ENCODE measurements at regions of chr6 and their contacts with region 1.

Region 1: GRCh38 chr6:159134701-159135364 is 34.4 kb upstream of the FNDC1 start:
- DNase-seq: peak; percentile 46 to 77 (median 68)
- ATAC-seq: peak; percentile 96
- H3K4me3 ChIP-seq: no peak overlapping the region
- H3K4me3 Mint-ChIP-seq: no peak overlapping the region
- H3K27ac ChIP-seq: no peak overlapping the region
- H3K27ac Mint-ChIP-seq: no peak overlapping the region
- H3K4me1 ChIP-seq: no peaks in the 10 kb centered on the region
- H3K4me1 Mint-ChIP-seq: peaks cover 0 to 9% (median 0%) of the 10 kb centered on the region in 7 donors
- H3K27me3 ChIP-seq: no peaks in the 10 kb centered on the region
- H3K27me3 Mint-ChIP-seq: peaks cover 0 to 42% (median 7%) of the 10 kb centered on the region in 5 donors

Region 2: DNA sequence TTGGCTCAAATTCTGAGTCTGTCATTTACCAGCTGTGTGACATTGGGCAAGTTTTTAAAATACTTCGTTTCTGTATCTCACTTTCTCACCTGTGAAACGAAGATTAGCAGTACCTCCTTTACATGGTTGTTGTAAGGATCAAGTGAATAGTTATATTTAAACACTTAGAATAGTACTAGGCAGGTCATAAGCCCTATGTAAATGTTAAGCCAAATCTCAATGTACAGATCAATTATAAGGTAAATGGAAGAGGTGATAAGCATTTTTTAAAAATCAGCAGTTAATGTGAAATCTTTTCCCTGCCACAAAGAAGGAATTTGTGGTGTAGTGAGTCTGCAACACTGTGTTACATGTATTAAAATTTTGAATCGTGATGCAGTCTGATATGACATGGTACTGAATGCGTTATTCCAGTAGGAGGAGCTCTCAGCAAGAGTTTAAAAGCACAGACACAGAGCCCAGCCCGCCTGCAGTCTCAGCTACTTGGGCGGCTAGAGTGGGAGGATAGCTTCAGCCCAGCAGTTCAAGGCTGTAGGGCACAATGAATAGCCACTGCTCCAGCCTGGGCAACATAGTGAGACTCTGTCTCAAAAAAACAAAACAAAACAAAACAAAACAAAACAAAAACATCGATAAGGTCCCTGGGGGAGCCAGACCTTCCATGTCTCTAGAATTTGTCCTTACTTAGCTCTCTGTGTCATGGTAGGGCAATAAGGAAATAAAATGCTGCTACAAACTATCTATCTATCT is 920.7 kb before region 1 on chr6:
- CTCF ChIA-PET with region 1: no interaction called
- POLR2A ChIA-PET with region 1: no interaction called
- intact Hi-C with region 1: loop called in 1 of 2 experiments (anchors 5 kb)
- DNase-seq: peak; percentile 18 to 62 (median 49)
- ATAC-seq: peak; percentile 96
- H3K4me3 ChIP-seq: no peak overlapping the region
- H3K4me3 Mint-ChIP-seq: no peak overlapping the region
- H3K27ac ChIP-seq: no peak overlapping the region
- H3K27ac Mint-ChIP-seq: no peak overlapping the region
- H3K4me1 ChIP-seq: no peaks in the 10 kb centered on the region
- H3K4me1 Mint-ChIP-seq: peaks cover under 1 to 16% (median 2%) of the 10 kb centered on the region in 7 donors
- H3K27me3 ChIP-seq: no peaks in the 10 kb centered on the region
- H3K27me3 Mint-ChIP-seq: peaks cover 0 to 2% (median 0%) of the 10 kb centered on the region in 5 donors

Region 3: GRCh38 chr6:158704181-158704822 is 430.5 kb before region 1 on chr6:
- CTCF ChIA-PET with region 1: interaction called, 3 read pairs
- POLR2A ChIA-PET with region 1: no interaction called
- intact Hi-C with region 1: loop called (anchors 1 to 2 kb)
- DNase-seq: peak; percentile 55 to 85 (median 74)
- ATAC-seq: peak; percentile 98
- H3K4me3 ChIP-seq: peak overlapping the region; percentile 60
- H3K4me3 Mint-ChIP-seq: peak overlapping the region; percentile 73 to 90 (median 84)
- H3K27ac ChIP-seq: peak overlapping the region; percentile 35
- H3K27ac Mint-ChIP-seq: peak overlapping the region in 8 of 9 donors; percentile 14 to 84 (median 64)
- H3K4me1 ChIP-seq: peaks cover 8 to 9% of the 10 kb centered on the region in 2 donors
- H3K4me1 Mint-ChIP-seq: peaks cover 7 to 27% (median 15%) of the 10 kb centered on the region in 7 donors
- H3K27me3 ChIP-seq: no peaks in the 10 kb centered on the region
- H3K27me3 Mint-ChIP-seq: no peaks in the 10 kb centered on the region

Region 4: GRCh38 chr6:158999666-159000403 is 135.0 kb before region 1 on chr6 and contains the start of gene RSPH3:
- CTCF ChIA-PET with region 1: interaction called, 44 read pairs
- POLR2A ChIA-PET with region 1: no interaction called
- intact Hi-C with region 1: no loop called
- DNase-seq: peak; percentile 64 to 93 (median 81)
- ATAC-seq: peak; percentile 93
- H3K4me3 ChIP-seq: peak within 1 kb of the TSS; percentile 97
- H3K4me3 Mint-ChIP-seq: peak within 1 kb of the TSS; percentile 88 to 99 (median 98)
- H3K27ac ChIP-seq: peak within 1 kb of the TSS; percentile 76
- H3K27ac Mint-ChIP-seq: peak within 1 kb of the TSS; percentile 58 to 95 (median 90)
- H3K4me1 ChIP-seq: peaks cover 7 to 16% of the 10 kb centered on the region in 2 donors
- H3K4me1 Mint-ChIP-seq: peaks cover 16 to 35% (median 26%) of the 10 kb centered on the region in 7 donors
- H3K27me3 ChIP-seq: no peaks in the 10 kb centered on the region
- H3K27me3 Mint-ChIP-seq: no peaks in the 10 kb centered on the region
- total RNA-seq, gene RSPH3: 1.3 to 3.6 (median 2.7) TPM

Region 5: DNA sequence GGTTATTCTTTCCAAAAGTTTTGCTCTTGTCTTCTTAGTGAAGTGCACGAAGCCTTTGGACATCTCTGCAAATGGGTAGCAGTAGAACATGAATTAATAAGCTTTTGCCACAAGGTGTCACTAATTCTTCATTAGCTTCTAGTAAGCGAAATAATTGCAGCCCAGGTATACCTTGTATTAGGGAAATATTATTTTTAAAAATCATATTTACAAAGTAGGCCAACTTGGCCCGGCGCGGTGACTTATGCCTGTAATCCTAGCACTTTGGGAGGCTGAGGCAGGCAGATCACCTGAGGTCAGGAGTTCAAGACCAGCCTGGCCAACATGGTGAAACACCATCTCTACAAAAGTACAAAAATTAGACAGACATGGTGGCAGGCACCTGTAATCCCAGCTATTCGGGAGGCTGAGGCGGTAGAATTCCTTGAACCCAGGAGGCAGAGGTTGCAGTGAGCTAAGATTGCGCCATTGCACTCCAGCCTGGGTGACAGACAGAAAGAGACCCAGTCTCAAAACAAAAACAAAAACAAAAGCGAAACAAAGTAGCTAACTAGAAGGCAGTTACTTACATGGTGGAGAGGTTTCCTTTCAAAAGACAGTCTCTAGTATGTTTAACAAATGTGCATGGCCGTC is 126.1 kb before region 1 on chr6:
- CTCF ChIA-PET with region 1: interaction called, 159 read pairs
- POLR2A ChIA-PET with region 1: interaction called, 24 read pairs
- intact Hi-C with region 1: loop called (anchors 1 kb)
- DNase-seq: peak in 8 of 9 donors; percentile 7 to 64 (median 56)
- ATAC-seq: peak; percentile 79
- H3K4me3 ChIP-seq: no peak overlapping the region
- H3K4me3 Mint-ChIP-seq: peak overlapping the region in 1 of 10 donors; percentile 16
- H3K27ac ChIP-seq: no peak overlapping the region
- H3K27ac Mint-ChIP-seq: peak overlapping the region in 1 of 9 donors; percentile 60
- H3K4me1 ChIP-seq: peaks cover 14 to 22% of the 10 kb centered on the region in 2 donors
- H3K4me1 Mint-ChIP-seq: peaks cover 17 to 44% (median 27%) of the 10 kb centered on the region in 7 donors
- H3K27me3 ChIP-seq: no peaks in the 10 kb centered on the region
- H3K27me3 Mint-ChIP-seq: no peaks in the 10 kb centered on the region

Region 6: GRCh38 chr6:159017757-159018559 is 116.9 kb before region 1 on chr6:
- CTCF ChIA-PET with region 1: interaction called, 159 read pairs
- POLR2A ChIA-PET with region 1: no interaction called
- intact Hi-C with region 1: no loop called
- DNase-seq: no peak
- ATAC-seq: no peak
- H3K4me3 ChIP-seq: no peak overlapping the region
- H3K4me3 Mint-ChIP-seq: peak overlapping the region in 9 of 10 donors; percentile 11 to 70 (median 53)
- H3K27ac ChIP-seq: peak overlapping the region; percentile 52
- H3K27ac Mint-ChIP-seq: peak overlapping the region; percentile 28 to 92 (median 69)
- H3K4me1 ChIP-seq: peaks cover 30 to 46% of the 10 kb centered on the region in 2 donors
- H3K4me1 Mint-ChIP-seq: peaks cover 16 to 50% (median 46%) of the 10 kb centered on the region in 7 donors
- H3K27me3 ChIP-seq: no peaks in the 10 kb centered on the region
- H3K27me3 Mint-ChIP-seq: no peaks in the 10 kb centered on the region

Region 7: GRCh38 chr6:159110013-159110412 is 24.8 kb before region 1 on chr6:
- CTCF ChIA-PET with region 1: interaction called, 35 read pairs
- POLR2A ChIA-PET with region 1: interaction called, 5 read pairs
- intact Hi-C with region 1: loop called in 1 of 2 experiments (anchors 1 kb)
- DNase-seq: peak in 5 of 9 donors; percentile 31 to 50 (median 34)
- ATAC-seq: no peak
- H3K4me3 ChIP-seq: no peak overlapping the region
- H3K4me3 Mint-ChIP-seq: peak overlapping the region in 2 of 10 donors; percentile 29 to 41
- H3K27ac ChIP-seq: no peak overlapping the region
- H3K27ac Mint-ChIP-seq: peak overlapping the region in 8 of 9 donors; percentile 50 to 92 (median 86)
- H3K4me1 ChIP-seq: peaks cover 59 to 62% of the 10 kb centered on the region in 2 donors
- H3K4me1 Mint-ChIP-seq: peaks cover 39 to 68% (median 58%) of the 10 kb centered on the region in 7 donors
- H3K27me3 ChIP-seq: no peaks in the 10 kb centered on the region
- H3K27me3 Mint-ChIP-seq: peaks cover 0 to 2% (median 0%) of the 10 kb centered on the region in 5 donors